K562 (cell line): ENCODE measurements at regions of chr7 and their contacts with region 1.

Region 1: GRCh38 chr7:5457245-5457735 is 33.7 kb upstream of the TNRC18 start:
- DNase-seq: peak in 2 of 4 experiments; percentile 78 to 89
- ATAC-seq: peak; percentile 80
- H3K4me3 ChIP-seq: peak overlapping the region; percentile 12; the same call in 1 of the 2 replicates
- H3K27ac ChIP-seq: peak overlapping the region; percentile 95
- H3K4me1 ChIP-seq: peaks cover 34 to 64% of the 10 kb centered on the region in 2 experiments
- H3K27me3 ChIP-seq: no peaks in the 10 kb centered on the region
- CTCF ChIP-seq: peak; percentile 31 to 41 (median 36); a peak in 3 of 6 replicates
- EP300 ChIP-seq: peak; percentile 79; the same call in 1 of the 2 replicates
- POLR2A ChIP-seq: no peak
- RAD21 ChIP-seq: peak in 1 of 2 experiments; percentile 49; a peak in 3 of 4 replicates

Region 2: DNA sequence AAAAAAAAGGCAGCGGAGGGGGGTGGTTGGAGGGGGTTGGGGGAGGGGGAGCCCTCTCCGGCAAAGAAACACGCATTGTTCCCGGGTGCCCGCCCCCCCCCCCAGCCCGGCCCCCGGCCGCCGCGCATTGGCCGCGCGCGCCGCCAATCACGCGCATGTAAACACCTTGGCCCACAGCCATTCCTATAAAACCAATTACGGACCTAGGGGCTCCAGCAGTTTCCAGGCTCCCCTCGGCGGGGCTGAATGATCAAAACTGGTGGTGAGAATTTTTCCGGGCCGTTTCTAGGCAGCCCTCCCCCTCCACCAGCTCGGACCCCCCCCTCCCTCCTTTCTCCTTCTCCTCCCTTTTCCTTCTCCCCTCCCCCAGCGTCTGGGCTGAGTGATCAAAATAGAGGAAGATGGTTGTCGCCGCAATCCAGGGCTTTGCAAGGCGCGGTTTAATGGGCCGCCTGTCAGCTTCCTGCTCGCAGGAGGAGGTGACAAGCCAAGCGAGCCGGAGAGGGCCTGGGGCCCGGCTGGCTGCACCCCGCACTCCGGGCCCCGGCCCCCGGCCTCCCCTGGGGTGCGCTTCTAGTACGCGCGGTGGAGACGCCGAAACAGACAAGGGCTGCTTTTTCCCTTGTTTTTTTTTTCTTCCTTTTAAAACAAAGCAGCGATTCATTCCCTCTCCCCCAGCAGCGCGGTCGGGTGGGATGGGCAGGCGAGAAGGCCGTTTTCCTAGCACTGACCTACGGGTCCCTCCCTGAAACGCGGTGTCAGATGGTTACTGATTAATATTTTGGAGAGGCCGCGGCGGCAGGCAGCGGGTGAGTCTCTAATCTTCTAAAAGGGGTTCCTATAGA is 33.2 kb before region 1 on chr7:
- CTCF ChIA-PET with region 1: no interaction called
- POLR2A ChIA-PET with region 1: interaction called, 10 read pairs
- in situ Hi-C with region 1: no loop called
- intact Hi-C with region 1: loop called (anchors 2 kb)
- DNase-seq: peak; percentile 91 to 99 (median 96)
- ATAC-seq: peak; percentile 27
- H3K4me3 ChIP-seq: peak overlapping the region; percentile 93
- H3K27ac ChIP-seq: peak overlapping the region; percentile 98
- H3K4me1 ChIP-seq: peaks cover 30 to 87% of the 10 kb centered on the region in 2 experiments
- H3K27me3 ChIP-seq: no peaks in the 10 kb centered on the region
- CTCF ChIP-seq: no peak
- EP300 ChIP-seq: peak; percentile 50; the same call in 1 of the 2 replicates
- POLR2A ChIP-seq: no peak; the same call in 1 of the 2 replicates
- RAD21 ChIP-seq: no peak

Region 3: GRCh38 chr7:5467645-5468044 is 10.4 kb after region 1 on chr7:
- CTCF ChIA-PET with region 1: no interaction called
- POLR2A ChIA-PET with region 1: interaction called, 14 read pairs
- in situ Hi-C with region 1: no loop called
- intact Hi-C with region 1: loop called (anchors 2 kb)
- DNase-seq: no peak
- ATAC-seq: no peak
- H3K4me3 ChIP-seq: no peak overlapping the region
- H3K27ac ChIP-seq: no peak overlapping the region
- H3K4me1 ChIP-seq: peaks cover 0 to 25% of the 10 kb centered on the region in 2 experiments; a peak in 4 of 5 replicates
- H3K27me3 ChIP-seq: no peaks in the 10 kb centered on the region
- CTCF ChIP-seq: no peak
- EP300 ChIP-seq: no peak
- POLR2A ChIP-seq: no peak
- RAD21 ChIP-seq: no peak

Region 4: GRCh38 chr7:5472432-5473315 is 15.4 kb after region 1 on chr7:
- CTCF ChIA-PET with region 1: no interaction called
- POLR2A ChIA-PET with region 1: interaction called, 14 read pairs
- in situ Hi-C with region 1: no loop called
- intact Hi-C with region 1: loop called (anchors 2 kb)
- DNase-seq: peak; percentile 74 to 86 (median 82)
- ATAC-seq: peak; percentile 97
- H3K4me3 ChIP-seq: no peak overlapping the region
- H3K27ac ChIP-seq: peak overlapping the region; percentile 56; the same call in 2 of the 3 replicates
- H3K4me1 ChIP-seq: peaks cover 3 to 35% of the 10 kb centered on the region in 2 experiments; a peak in 4 of 5 replicates
- H3K27me3 ChIP-seq: no peaks in the 10 kb centered on the region
- CTCF ChIP-seq: peak; percentile 68 to 79 (median 70)
- EP300 ChIP-seq: peak; percentile 61; the same call in 1 of the 2 replicates
- POLR2A ChIP-seq: no peak
- RAD21 ChIP-seq: peak; percentile 75 to 90

Region 5: GRCh38 chr7:6306471-6306870 is 849.2 kb after region 1 on chr7:
- CTCF ChIA-PET with region 1: no interaction called
- POLR2A ChIA-PET with region 1: no interaction called
- in situ Hi-C with region 1: no loop called
- intact Hi-C with region 1: no loop called
- DNase-seq: no peak
- ATAC-seq: no peak
- H3K4me3 ChIP-seq: no peak overlapping the region
- H3K27ac ChIP-seq: no peak overlapping the region
- H3K4me1 ChIP-seq: no peaks in the 10 kb centered on the region; a peak in 1 of 5 replicates
- H3K27me3 ChIP-seq: no peaks in the 10 kb centered on the region
- CTCF ChIP-seq: no peak
- EP300 ChIP-seq: no peak
- POLR2A ChIP-seq: no peak
- RAD21 ChIP-seq: no peak